HEK293 (cell line): ENCODE measurements at regions of chr17 and their contacts with region 1.

Region 1: DNA sequence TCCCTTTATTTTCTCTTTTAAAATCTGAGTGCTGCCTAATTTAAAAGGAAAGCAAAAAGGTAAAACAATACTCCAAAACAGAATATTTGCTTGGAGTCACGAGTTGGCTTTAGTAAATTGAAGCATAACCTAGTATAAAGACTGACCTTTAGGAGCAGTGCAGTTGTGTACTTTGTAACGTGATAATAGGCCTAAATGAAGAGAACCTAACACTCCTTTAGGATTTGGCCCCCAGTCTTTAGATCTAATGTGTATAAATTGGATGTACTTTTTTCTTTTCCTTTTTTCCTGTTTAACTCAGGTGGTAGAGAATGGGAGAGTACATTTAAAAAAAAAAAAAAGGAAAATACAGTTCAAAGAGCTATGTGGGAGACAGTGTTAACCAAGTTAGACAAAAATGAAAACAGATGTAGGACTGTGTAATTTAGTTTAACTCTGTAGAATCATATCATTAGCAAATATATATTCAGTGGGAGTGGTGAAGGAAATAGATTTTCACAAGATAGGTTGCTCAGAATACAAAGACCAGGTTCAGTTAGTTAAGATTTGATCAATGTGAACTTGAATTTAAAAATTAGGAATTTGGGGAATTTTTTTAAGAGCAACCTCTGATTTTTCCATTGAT is 16.8 kb downstream of the CPD start:
- H3K4me3 ChIP-seq: no peak overlapping the region
- H3K27ac ChIP-seq: no peak overlapping the region
- H3K4me1 ChIP-seq: peaks cover 27% of the 10 kb centered on the region
- CTCF ChIP-seq: no peak

Region 2: GRCh38 chr17:30378824-30379302 is 16.6 kb before region 1 on chr17 and contains the start of gene CPD:
- CTCF ChIA-PET with region 1: interaction called, 17 read pairs
- POLR2A ChIA-PET with region 1: interaction called, 8 read pairs
- H3K4me3 ChIP-seq: peak within 1 kb of the TSS; percentile 88
- H3K27ac ChIP-seq: peak within 1 kb of the TSS; percentile 86
- H3K4me1 ChIP-seq: peaks cover 36% of the 10 kb centered on the region
- CTCF ChIP-seq: no peak